ENCODE measurements at regions of chrX and their contacts with region 1.

Region 1: GRCh38 chrX:23901805-23902204 is 5.9 kb downstream of the APOO start:
- DNase-seq: peak; percentile 81
- H3K4me3 Mint-ChIP-seq: no peak overlapping the region
- H3K27ac Mint-ChIP-seq: no peak overlapping the region
- H3K4me1 Mint-ChIP-seq: peaks cover 11% of the 10 kb centered on the region
- H3K27me3 Mint-ChIP-seq: no peaks in the 10 kb centered on the region

Region 2: DNA sequence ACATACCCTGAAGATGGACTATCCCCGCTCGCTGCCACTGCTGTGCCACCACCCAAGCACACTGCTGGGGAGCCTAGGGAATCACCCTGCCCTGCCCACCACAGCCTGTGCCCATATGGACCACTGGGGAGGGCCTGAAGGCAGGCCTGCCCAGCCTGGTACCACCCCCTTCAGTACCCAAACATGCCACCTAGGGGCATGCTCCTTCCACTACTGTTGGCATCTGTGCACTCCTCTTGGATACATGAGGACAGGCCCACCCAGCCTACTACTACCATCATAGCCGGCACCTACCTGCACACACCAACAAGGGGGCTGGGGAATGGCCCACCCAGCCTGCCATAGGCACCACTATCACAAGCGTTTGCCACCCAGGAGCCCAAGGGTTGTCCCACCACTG is 264.6 kb before region 1 on chrX:
- intact Hi-C with region 1: loop called (anchors 1 kb)
- DNase-seq: peak; percentile 85
- H3K4me3 Mint-ChIP-seq: no peak overlapping the region
- H3K27ac Mint-ChIP-seq: no peak overlapping the region
- H3K4me1 Mint-ChIP-seq: no peaks in the 10 kb centered on the region
- H3K27me3 Mint-ChIP-seq: peaks cover 8% of the 10 kb centered on the region

Region 3: GRCh38 chrX:23694606-23695005 is 207.2 kb before region 1 on chrX:
- intact Hi-C with region 1: loop called (anchors 1 kb)
- DNase-seq: peak; percentile 76
- H3K4me3 Mint-ChIP-seq: no peak overlapping the region
- H3K27ac Mint-ChIP-seq: no peak overlapping the region
- H3K4me1 Mint-ChIP-seq: no peaks in the 10 kb centered on the region
- H3K27me3 Mint-ChIP-seq: no peaks in the 10 kb centered on the region

Region 4: DNA sequence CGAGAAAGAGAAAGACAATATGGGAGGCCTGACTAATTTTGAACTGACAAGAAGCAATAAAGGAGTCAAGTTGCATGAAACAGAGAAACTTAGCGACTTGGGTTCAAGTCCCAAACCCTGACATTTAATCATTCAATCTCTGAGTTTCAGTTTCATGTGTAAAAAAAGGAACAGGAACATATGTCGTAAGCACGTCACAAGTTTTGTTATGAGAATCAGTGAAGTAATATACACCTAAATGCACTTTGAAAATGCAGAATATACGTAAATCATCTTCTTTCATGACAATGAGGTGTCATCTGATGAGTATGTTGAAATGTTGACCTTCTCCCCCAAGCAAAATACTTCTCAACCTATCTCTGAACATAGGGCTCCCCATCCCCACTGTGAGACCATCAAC is 169.1 kb before region 1 on chrX:
- intact Hi-C with region 1: loop called (anchors 2 kb)
- DNase-seq: peak; percentile 61
- H3K4me3 Mint-ChIP-seq: peak overlapping the region; percentile 59
- H3K27ac Mint-ChIP-seq: peak overlapping the region; percentile 89
- H3K4me1 Mint-ChIP-seq: peaks cover 20% of the 10 kb centered on the region
- H3K27me3 Mint-ChIP-seq: no peaks in the 10 kb centered on the region

Region 5: GRCh38 chrX:23756157-23756559 is 145.6 kb before region 1 on chrX:
- intact Hi-C with region 1: loop called (anchors 1 kb)
- DNase-seq: peak; percentile 88
- H3K4me3 Mint-ChIP-seq: no peak overlapping the region
- H3K27ac Mint-ChIP-seq: peak overlapping the region; percentile 20
- H3K4me1 Mint-ChIP-seq: peaks cover 6% of the 10 kb centered on the region
- H3K27me3 Mint-ChIP-seq: no peaks in the 10 kb centered on the region

Region 6: DNA sequence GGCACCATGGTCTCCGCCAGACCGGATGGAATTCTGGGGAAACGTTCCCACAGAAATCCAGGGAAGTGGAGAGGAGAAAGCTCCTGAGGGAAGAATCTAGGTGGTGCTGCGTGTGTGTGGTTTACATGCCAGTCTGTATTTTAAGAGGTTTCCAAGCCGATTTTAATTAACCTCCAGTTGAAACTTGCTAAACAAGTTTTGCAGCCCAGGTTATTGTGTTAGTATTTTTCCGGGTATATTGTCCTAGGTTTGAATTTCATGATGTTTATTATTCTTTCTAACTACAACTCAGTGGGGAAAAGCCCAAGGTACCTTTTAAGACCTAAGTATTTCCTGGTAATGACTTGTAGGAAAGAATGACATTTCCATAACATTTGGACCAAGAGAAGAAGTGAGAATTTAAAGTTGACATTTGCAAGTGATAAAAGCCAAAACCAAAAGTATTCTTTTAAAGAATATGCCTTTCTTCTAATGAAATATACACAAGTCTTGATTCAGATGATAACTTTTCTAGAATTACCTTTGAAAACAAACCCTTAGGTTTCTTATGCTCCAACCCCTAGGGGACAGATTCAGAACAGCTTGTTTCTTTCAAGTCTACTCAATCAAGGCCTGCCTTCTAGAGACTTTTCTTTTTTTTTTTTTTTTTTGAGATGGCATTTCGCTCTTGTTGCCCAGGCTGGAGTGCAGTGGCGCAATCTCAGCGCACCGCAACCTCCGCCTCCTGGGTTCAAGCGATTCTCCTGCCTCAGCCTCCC is 104.3 kb before region 1 on chrX:
- intact Hi-C with region 1: no loop called
- DNase-seq: no peak
- H3K4me3 Mint-ChIP-seq: no peak overlapping the region
- H3K27ac Mint-ChIP-seq: peak overlapping the region; percentile 20
- H3K4me1 Mint-ChIP-seq: peaks cover 2% of the 10 kb centered on the region
- H3K27me3 Mint-ChIP-seq: no peaks in the 10 kb centered on the region

Region 7: DNA sequence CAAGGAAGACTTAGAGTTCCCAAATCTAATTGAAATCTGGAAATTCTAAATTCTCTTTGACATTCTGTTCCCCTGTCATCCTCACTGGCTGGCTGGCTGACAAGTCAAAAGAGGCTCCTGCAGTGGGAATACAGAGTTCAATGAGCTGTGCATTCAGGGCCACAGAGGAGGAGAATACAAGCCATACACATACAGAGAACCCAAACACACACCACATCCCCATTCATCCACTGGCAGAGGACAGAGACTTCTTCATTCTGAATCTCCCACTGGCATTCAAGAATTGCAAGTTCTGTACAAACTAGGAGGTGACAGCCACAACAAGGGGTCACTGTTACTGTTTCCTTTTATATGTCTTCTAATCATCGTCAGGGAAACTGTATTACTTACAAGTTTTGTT is 69.1 kb before region 1 on chrX:
- intact Hi-C with region 1: loop called (anchors 2 kb)
- DNase-seq: no peak
- H3K4me3 Mint-ChIP-seq: no peak overlapping the region
- H3K27ac Mint-ChIP-seq: no peak overlapping the region
- H3K4me1 Mint-ChIP-seq: no peaks in the 10 kb centered on the region
- H3K27me3 Mint-ChIP-seq: no peaks in the 10 kb centered on the region

Region 8: GRCh38 chrX:23964191-23964590 is 62.4 kb after region 1 on chrX:
- intact Hi-C with region 1: no loop called
- DNase-seq: no peak
- H3K4me3 Mint-ChIP-seq: no peak overlapping the region
- H3K27ac Mint-ChIP-seq: no peak overlapping the region
- H3K4me1 Mint-ChIP-seq: peaks cover 5% of the 10 kb centered on the region
- H3K27me3 Mint-ChIP-seq: no peaks in the 10 kb centered on the region

Region 9: DNA sequence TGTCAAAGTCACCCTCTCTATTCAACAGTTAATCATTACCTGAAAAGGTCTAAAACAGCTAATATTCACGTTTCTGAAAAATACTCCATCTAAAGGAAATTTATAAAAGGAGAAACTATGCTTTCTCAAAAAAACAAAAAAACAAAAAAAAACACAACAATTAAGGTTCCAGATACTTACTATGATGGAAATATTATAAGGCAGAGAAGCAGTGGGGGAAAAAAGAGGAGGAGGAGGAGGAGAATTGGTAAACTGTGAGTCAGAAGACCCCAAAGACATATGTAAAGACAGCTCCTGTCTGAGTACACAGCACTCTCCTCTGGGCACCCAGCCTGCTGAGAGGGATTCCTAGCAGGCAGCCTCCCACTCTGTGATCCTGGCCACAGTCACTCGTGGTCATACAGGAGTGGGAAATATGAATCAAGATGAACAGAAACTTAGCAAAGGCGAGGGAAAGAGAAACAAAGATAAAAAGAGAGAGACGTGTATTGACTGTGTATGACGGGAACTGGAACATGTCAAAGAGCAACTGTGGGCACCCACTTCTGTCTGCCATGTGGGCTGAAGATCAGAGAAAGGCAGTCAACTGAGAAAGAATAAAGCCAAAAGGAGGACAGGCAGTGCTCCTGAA is 112.7 kb after region 1 on chrX:
- intact Hi-C with region 1: no loop called
- DNase-seq: peak; percentile 72
- H3K4me3 Mint-ChIP-seq: peak overlapping the region; percentile 69
- H3K27ac Mint-ChIP-seq: peak overlapping the region; percentile 86
- H3K4me1 Mint-ChIP-seq: peaks cover 32% of the 10 kb centered on the region
- H3K27me3 Mint-ChIP-seq: no peaks in the 10 kb centered on the region

Region 10: DNA sequence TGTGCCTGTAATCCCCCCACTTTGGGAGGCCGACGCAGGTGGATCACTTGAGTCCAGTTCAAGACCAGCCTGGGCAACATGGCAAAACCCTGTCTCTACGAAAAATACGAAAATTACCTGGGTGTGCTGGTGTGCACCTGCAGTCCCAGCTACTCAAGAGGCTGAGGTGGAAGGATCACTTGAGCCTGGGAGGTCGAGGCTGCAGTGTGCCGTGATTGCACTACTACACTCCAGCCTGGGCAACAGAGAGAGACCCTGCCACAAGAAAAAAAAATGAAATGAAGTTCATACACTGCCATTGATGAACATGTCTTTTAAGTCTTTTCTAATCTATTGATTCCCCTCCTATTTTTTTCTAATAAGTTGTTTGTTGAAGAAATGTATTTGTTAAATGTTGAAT is 242.7 kb after region 1 on chrX:
- intact Hi-C with region 1: no loop called
- DNase-seq: no peak
- H3K4me3 Mint-ChIP-seq: no peak overlapping the region
- H3K27ac Mint-ChIP-seq: no peak overlapping the region
- H3K4me1 Mint-ChIP-seq: peaks cover 16% of the 10 kb centered on the region
- H3K27me3 Mint-ChIP-seq: no peaks in the 10 kb centered on the region

Measured in activated CD4-positive, alpha-beta T cell treated with anti-CD3 and anti-CD28 coated beads, Interleukin-2, amount 10 ng/mL, durations not matched to agents 24 days and 14 days (primary cell).